ENCODE measurements at regions of chr9 and their contacts with region 1.

Region 1: DNA sequence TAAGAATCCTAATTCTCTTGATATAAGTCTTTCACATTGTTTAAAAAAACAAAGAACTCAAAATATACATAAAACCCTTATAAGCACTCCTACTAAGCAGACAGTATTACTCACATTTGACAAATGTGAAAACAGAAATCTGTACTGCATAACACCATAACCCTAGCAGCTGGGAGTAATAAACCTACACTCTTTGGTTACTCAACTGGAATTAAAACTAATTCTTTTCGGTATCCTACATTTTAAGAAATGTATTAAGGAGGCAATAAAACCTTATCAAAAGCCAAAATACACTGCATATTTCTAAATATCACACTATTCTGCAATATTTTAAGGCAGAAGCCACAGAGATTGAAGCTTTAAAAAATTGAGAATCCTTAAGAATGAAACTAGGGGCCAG is 6.8 kb downstream of the AUH start:
- DNase-seq: no peak
- H3K4me3 Mint-ChIP-seq: no peak overlapping the region
- H3K27ac Mint-ChIP-seq: no peak overlapping the region
- H3K4me1 Mint-ChIP-seq: peaks cover 51% of the 10 kb centered on the region
- H3K27me3 Mint-ChIP-seq: no peaks in the 10 kb centered on the region

Region 2: DNA sequence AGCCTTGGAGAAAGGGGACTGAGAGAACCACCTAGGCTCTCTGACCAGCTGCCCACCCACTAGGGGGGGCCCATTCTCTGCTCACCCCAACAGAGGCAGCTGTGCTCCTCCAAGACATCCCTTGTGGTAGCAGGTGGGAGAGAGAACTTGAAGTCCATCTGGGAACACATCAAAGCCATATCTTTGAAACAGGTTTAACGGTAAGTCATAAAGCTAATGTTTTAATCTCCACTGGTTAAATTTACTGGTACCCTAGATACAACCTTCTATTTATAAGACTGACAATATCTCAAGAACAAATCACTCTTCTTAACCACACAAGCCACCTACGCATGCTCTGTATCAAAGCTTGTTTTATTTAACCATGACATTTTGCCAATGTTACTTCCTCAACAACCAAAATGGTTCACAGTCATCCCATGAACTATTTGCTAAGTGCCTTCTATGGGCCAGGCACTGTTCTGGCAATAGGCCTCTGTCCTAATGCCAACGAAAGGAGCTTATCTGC is 13.6 kb before region 1 on chr9:
- CTCF ChIA-PET with region 1: interaction called, 15 read pairs
- POLR2A ChIA-PET with region 1: no interaction called
- DNase-seq: no peak
- H3K4me3 Mint-ChIP-seq: no peak overlapping the region
- H3K27ac Mint-ChIP-seq: no peak overlapping the region
- H3K4me1 Mint-ChIP-seq: peaks cover 33% of the 10 kb centered on the region
- H3K27me3 Mint-ChIP-seq: no peaks in the 10 kb centered on the region

Measured in activated CD4-positive, alpha-beta T cell treated with anti-CD3 and anti-CD28 coated beads, Interleukin-2, amount 10 ng/mL, durations not matched to agents 7 days and 5 days (primary cell).